Caco-2 (cell line): ENCODE measurements at regions of chr6 and their contacts with region 1.

Region 1: GRCh38 chr6:45822246-45822812 is 193.3 kb downstream of the CLIC5 start:
- DNase-seq: no peak
- H3K4me3 ChIP-seq: no peak overlapping the region
- H3K4me3 Mint-ChIP-seq: no peak overlapping the region
- H3K27ac Mint-ChIP-seq: peak overlapping the region; percentile 29
- H3K4me1 ChIP-seq: no peaks in the 10 kb centered on the region
- H3K4me1 Mint-ChIP-seq: no peaks in the 10 kb centered on the region
- H3K27me3 ChIP-seq: no peaks in the 10 kb centered on the region
- H3K27me3 Mint-ChIP-seq: peaks cover 5% of the 10 kb centered on the region
- CTCF ChIP-seq: no peak

Region 2: GRCh38 chr6:45843848-45844521 is 21.7 kb after region 1 on chr6:
- CTCF ChIA-PET with region 1: no interaction called
- POLR2A ChIA-PET with region 1: no interaction called
- intact Hi-C with region 1: no loop called
- DNase-seq: no peak
- H3K4me3 ChIP-seq: no peak overlapping the region
- H3K4me3 Mint-ChIP-seq: no peak overlapping the region
- H3K27ac Mint-ChIP-seq: peak overlapping the region; percentile 11
- H3K4me1 ChIP-seq: peaks cover 21% of the 10 kb centered on the region
- H3K4me1 Mint-ChIP-seq: peaks cover 9% of the 10 kb centered on the region
- H3K27me3 ChIP-seq: no peaks in the 10 kb centered on the region
- H3K27me3 Mint-ChIP-seq: no peaks in the 10 kb centered on the region
- CTCF ChIP-seq: no peak

Region 3: GRCh38 chr6:45922728-45923351 is 100.5 kb after region 1 on chr6:
- CTCF ChIA-PET with region 1: no interaction called
- POLR2A ChIA-PET with region 1: no interaction called
- intact Hi-C with region 1: loop called (anchors 5 kb)
- DNase-seq: peak; percentile 43 to 64
- H3K4me3 ChIP-seq: no peak overlapping the region
- H3K4me3 Mint-ChIP-seq: no peak overlapping the region
- H3K27ac Mint-ChIP-seq: no peak overlapping the region
- H3K4me1 ChIP-seq: peaks cover 4% of the 10 kb centered on the region; the same call in 1 of the 2 replicates
- H3K4me1 Mint-ChIP-seq: peaks cover 6% of the 10 kb centered on the region
- H3K27me3 ChIP-seq: no peaks in the 10 kb centered on the region
- H3K27me3 Mint-ChIP-seq: no peaks in the 10 kb centered on the region
- CTCF ChIP-seq: peak; percentile 35 to 58